Mammary epithelial cell (primary cell): ENCODE measurements at regions of chr3 and their contacts with region 1.

Region 1: GRCh38 chr3:183427876-183428446 is 458 bp downstream of the MCF2L2 start:
- DNase-seq: peak; percentile 51
- H3K4me3 ChIP-seq: peak overlapping the region; percentile 68 to 94 (median 80)
- H3K27ac ChIP-seq: no peak overlapping the region
- H3K4me1 ChIP-seq: peaks cover 15% of the 10 kb centered on the region
- H3K27me3 ChIP-seq: peaks cover 2% of the 10 kb centered on the region
- CTCF ChIP-seq: no peak

Region 2: DNA sequence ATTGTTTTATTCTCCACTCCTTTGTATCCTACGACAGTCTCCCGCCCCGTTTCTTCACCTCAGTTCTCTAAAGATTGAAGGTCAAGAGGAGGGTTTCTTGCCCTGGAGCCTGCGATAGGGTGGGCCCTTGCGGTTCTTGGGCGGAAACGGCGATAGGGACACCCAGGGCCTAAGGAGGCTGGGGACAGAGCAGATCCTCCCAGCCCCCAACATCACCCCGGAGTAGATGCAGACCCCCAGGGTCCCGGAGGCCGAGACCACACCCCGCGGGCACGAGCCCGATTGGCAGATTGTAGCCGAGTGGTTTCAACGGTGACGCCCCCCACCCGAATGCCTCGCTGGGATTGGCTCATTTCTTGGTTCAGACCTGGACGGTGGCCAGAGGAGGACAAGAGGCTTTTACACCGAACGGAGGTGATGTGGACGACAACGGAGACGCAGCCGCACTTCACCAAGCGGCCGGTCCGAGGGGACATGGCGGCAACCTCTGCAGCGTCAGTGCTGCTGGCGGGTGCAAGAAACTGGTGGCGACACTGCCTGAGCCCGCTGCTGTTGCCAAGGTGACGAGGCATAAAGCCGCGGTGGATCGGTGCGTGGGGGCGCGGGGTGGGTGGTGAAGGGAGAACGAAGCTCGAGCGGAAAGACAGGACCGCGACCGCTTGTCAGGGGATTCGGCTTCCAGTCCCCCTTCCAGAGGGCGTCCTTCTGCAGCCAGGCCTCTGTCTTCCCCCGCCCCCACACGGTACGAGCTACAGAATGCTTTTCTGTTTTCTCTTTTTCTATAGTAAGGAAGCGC is 19.4 kb after region 1 on chr3:
- CTCF ChIA-PET with region 1: no interaction called
- dilution Hi-C with region 1: no loop called
- in situ Hi-C with region 1: no loop called
- intact Hi-C with region 1: loop called (anchors 2 kb)
- DNase-seq: peak; percentile 84
- H3K4me3 ChIP-seq: peak overlapping the region; percentile 78 to 94 (median 87)
- H3K27ac ChIP-seq: peak overlapping the region; percentile 22
- H3K4me1 ChIP-seq: peaks cover 6% of the 10 kb centered on the region
- H3K27me3 ChIP-seq: no peaks in the 10 kb centered on the region
- CTCF ChIP-seq: peak in 1 of 2 donors; percentile 12

Region 3: GRCh38 chr3:183481582-183481981 is 53.6 kb after region 1 on chr3:
- CTCF ChIA-PET with region 1: no interaction called
- dilution Hi-C with region 1: no loop called
- in situ Hi-C with region 1: no loop called
- intact Hi-C with region 1: no loop called
- DNase-seq: peak; percentile 92
- H3K4me3 ChIP-seq: no peak overlapping the region
- H3K27ac ChIP-seq: peak overlapping the region; percentile 4
- H3K4me1 ChIP-seq: no peaks in the 10 kb centered on the region
- H3K27me3 ChIP-seq: no peaks in the 10 kb centered on the region
- CTCF ChIP-seq: no peak

Region 4: GRCh38 chr3:184196536-184196935 is 768.6 kb after region 1 on chr3:
- CTCF ChIA-PET with region 1: interaction called, 12 read pairs
- dilution Hi-C with region 1: no loop called
- in situ Hi-C with region 1: no loop called
- intact Hi-C with region 1: no loop called
- DNase-seq: no peak
- H3K4me3 ChIP-seq: no peak overlapping the region
- H3K27ac ChIP-seq: no peak overlapping the region
- H3K4me1 ChIP-seq: no peaks in the 10 kb centered on the region
- H3K27me3 ChIP-seq: no peaks in the 10 kb centered on the region
- CTCF ChIP-seq: no peak

Region 5: GRCh38 chr3:185316738-185317407 is 1888.9 kb after region 1 on chr3:
- CTCF ChIA-PET with region 1: no interaction called
- dilution Hi-C with region 1: no loop called
- in situ Hi-C with region 1: no loop called
- intact Hi-C with region 1: no loop called
- DNase-seq: peak; percentile 95
- H3K4me3 ChIP-seq: peak overlapping the region in 2 of 3 experiments; percentile 6 to 9
- H3K27ac ChIP-seq: peak overlapping the region; percentile 86
- H3K4me1 ChIP-seq: peaks cover 8% of the 10 kb centered on the region
- H3K27me3 ChIP-seq: no peaks in the 10 kb centered on the region
- CTCF ChIP-seq: no peak